ENCODE measurements at regions of chr5 and their contacts with region 1.

Region 1: GRCh38 chr5:76145945-76146344 is 62.8 kb downstream of the SV2C start:
- DNase-seq: peak; percentile 29
- H3K4me3 Mint-ChIP-seq: no peak overlapping the region
- H3K27ac Mint-ChIP-seq: no peak overlapping the region
- H3K4me1 Mint-ChIP-seq: no peaks in the 10 kb centered on the region
- H3K27me3 Mint-ChIP-seq: peaks cover 16% of the 10 kb centered on the region

Region 2: DNA sequence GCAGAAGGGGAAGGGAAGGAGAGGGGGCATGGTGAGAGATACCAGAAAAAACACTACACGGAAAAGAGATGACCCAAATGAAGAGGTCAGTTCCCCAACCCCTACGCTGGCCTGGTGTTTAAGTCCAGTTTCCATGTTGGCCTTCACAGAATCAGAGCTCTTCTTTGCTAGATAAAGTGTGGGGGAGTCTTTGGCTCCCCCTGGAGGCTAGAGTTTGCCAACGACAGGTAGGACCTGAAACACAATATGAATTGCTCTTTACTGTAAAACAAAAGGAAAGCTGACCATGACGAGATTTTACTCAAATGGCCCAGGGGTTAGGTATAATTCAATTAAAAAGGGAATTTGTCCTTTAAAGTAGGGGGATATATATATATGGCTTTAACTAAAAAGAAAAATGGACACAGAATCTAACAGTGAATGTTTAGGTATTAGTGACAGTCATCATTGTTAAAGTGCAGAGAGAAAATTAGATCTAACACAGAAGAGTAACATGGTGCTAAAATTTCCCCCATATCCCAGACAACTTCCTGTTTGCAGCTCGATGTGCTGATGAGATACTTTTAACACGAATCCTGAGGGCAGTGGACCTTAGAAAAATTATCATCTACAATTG is 29.2 kb after region 1 on chr5:
- CTCF ChIA-PET with region 1: interaction called, 24 read pairs
- DNase-seq: peak; percentile 68
- H3K4me3 Mint-ChIP-seq: no peak overlapping the region
- H3K27ac Mint-ChIP-seq: peak overlapping the region; percentile 79
- H3K4me1 Mint-ChIP-seq: peaks cover 21% of the 10 kb centered on the region
- H3K27me3 Mint-ChIP-seq: no peaks in the 10 kb centered on the region

Measured in activated naive CD4-positive, alpha-beta T cell treated with anti-CD3 and anti-CD28 coated beads, Interleukin-2, amount 10 ng/mL, durations not matched to agents 7 days and 5 days (primary cell).